ENCODE measurements at regions of chr22 and their contacts with region 1.

Region 1: GRCh38 chr22:21712894-21713712 is 22.5 kb downstream of the YPEL1 start:
- DNase-seq: peak; percentile 88

Region 2: DNA sequence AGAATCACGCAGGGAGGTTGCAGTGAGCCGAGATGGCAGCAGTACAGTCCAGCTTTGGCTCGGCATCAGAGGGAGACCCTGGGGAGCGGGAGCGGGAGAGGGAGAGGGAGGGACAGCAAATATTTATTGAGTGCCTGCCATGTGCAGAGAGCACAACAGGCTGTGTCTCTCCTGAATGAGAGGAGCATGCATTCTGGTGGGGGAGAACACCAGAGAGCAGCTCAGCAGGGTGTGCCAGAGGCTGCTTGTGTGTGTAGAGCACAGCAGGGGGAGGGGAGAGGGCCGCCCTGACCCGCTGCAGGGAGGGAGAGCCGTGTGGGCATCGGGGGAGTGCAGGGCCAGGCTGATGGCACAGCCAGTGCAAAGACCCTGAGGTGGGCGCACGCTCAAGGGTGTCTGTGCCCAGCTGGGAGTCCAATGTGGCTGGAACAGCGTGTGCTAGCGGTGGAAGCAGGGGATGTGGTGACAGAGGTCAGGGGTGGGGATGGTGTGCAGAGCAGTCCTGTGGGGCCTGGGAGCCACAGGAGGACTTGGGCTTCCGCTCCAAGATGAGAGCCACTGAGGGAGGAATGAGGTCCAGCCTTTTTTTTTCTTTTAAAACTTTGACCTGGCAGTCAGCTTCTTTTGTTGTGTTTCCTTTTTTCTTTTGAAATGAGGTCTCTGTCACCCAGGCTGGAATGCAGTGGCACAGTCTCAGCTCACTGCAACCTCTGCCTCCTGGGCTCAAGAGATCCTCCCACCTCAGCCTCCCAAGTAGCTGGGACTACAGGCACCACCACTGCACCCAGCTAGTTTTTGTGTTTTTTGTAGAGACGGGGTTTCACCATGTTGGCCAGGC is 35.3 kb before region 1 on chr22:
- intact Hi-C with region 1: no loop called
- DNase-seq: no peak

Region 3: DNA sequence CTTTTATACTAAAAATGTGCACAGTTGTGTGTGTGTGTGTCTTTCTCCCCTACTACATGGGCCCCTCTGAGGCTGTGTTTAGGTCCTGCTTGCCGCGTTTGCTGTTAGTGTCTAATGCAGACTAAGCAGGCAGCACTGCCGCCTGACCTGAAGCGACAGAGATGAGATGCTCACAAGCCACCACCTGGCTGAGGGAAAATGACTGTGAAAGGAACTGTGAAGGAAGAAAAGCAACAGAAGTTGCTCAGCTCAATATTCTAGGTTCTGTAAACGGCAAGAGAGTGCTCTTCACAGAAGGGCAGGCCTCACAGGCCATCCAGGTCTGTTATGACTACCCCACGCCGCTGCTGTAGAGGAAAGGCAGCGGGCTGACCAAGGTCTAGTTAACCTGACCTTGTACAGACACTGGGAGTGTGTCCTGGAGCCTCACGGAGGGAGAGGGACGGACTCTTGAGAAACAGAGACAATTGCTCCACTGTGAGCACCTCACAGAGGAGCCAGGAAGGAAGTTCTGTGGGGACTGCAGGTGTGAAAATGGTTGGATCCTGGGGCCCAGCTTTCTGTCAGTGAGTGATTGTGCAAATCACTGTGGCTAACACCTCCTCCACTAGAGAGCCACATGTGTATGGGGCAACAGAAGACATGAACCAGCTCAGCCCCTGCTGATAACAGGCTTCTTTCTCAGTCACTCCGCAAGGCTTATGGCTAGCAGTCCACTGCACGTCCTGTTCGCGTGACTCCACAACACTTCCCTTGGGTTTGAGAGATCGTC is 53.8 kb after region 1 on chr22:
- intact Hi-C with region 1: loop called in 1 of 2 experiments (anchors 1 kb)
- DNase-seq: peak; percentile 78

Region 4: DNA sequence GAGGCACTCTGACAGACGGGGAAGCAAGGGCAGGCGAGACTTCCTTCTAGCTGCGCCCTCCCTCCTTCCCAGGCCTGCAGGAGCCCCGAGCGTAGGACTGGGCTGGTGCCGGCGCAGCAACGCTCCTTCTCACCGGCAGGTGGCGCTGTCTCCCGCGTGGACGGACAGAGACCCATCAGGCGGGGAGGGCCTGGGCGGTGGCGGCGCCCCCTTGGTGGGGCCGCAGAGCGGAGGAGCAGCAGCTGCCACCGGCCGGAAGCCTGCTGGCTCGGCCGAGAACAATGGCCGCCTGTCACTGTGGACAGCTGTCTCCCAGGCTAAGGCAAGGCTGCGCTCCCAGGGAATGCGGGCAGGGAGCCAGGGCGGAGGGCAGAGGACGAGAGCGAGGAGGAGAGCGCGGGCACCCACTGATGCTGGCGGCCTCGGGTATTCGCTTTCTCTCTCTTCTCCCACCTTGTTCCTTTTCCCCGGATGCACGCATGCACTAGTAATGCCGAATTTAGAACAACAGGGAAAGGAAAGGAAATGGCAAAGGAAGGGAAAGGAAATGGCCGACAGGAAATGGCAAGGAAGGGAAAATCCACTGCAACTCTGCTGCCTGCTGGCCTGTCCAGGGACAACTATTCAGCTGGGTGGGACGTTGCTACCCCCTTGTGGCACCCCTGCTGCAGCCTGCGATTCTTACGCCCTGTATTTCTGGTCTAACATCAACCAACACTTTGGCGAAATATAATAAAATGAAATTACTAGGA is 225.1 kb after region 1 on chr22:
- intact Hi-C with region 1: loop called (anchors 5 kb)
- DNase-seq: peak; percentile 99